ENCODE measurements at regions of chr1 and their contacts with region 1.

Region 1: DNA sequence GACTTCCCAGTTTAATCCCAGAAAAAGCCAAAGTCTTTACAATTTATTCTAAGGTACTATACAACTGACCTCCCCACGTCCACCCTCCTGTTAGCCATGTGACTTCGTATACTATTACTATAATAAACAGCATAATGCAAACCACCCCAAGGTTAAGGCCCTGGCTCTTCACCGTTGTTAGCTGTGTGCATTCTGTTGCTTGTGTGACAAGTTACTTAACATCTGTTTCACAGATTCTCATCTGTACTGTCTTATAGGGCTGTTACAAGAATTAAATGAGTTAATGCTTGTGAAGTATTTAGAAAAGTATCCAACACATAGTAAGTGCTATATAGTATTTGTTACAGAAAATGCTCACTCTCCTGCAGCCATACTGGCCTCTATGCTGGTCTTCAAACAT is 15.7 kb downstream of the WARS2 start:
- H3K4me3 Mint-ChIP-seq: no peak overlapping the region
- H3K27ac Mint-ChIP-seq: no peak overlapping the region
- H3K4me1 Mint-ChIP-seq: no peaks in the 10 kb centered on the region
- H3K27me3 Mint-ChIP-seq: no peaks in the 10 kb centered on the region

Region 2: DNA sequence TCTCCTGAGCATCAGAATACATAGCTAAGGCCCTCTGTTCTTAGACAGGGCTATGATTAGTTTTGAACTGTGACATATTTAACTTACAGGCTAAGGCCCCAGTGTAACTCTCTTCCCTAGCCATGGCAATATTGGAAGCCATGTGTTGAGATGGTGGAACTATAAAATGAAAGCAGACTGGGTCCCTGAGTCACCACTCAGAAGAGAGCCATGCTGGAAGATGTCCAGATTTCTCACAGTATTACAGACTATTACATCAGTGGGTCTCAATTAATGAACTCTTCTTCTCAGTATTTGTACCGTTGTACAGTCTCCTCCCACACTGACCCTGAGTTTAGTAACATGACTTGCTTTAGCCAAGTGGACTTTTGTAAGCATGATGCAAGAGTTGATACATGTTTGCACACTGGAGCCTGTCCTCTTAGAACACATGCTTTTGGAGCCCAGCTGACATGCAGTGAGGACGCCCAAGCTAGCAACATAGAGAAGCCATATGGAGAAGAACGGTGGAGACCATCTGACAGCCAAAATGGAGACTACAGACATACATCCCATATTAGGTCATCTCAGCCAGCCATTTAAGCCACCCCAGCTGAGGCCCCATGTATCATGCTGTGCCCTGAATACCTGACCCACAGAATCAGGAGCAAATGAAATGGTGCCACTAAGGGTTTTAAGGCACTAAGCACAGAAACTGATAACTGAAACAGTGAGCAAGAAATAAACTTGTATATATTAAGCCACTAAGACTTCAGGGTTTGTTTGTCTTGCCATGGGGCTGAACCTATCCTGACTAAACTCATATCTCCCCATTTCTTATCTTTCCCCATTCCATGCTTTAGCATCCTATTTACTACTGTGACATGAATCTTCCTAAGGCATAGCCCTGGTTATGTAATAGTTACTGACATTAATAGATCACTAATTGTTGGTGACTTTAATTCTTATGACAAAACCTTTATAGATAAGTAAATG is 161.0 kb before region 1 on chr1:
- intact Hi-C with region 1: no loop called
- H3K4me3 Mint-ChIP-seq: no peak overlapping the region
- H3K27ac Mint-ChIP-seq: no peak overlapping the region
- H3K4me1 Mint-ChIP-seq: no peaks in the 10 kb centered on the region
- H3K27me3 Mint-ChIP-seq: peaks cover 4% of the 10 kb centered on the region

Region 3: GRCh38 chr1:119191325-119191724 is 66.6 kb after region 1 on chr1:
- intact Hi-C with region 1: loop called (anchors 10 kb)
- H3K4me3 Mint-ChIP-seq: no peak overlapping the region
- H3K27ac Mint-ChIP-seq: no peak overlapping the region
- H3K4me1 Mint-ChIP-seq: no peaks in the 10 kb centered on the region
- H3K27me3 Mint-ChIP-seq: no peaks in the 10 kb centered on the region

Measured in dendritic cell treated with granulocyte-macrophage colony-stimulating factor and Interleukin-4, amounts not matched to agents 40 ng/mL and 50 ng/mL, for 4 days (primary cell).